Esophagus squamous epithelium (tissue), 5 donors: ENCODE measurements at regions of chr20 and their contacts with region 1.

Region 1: DNA sequence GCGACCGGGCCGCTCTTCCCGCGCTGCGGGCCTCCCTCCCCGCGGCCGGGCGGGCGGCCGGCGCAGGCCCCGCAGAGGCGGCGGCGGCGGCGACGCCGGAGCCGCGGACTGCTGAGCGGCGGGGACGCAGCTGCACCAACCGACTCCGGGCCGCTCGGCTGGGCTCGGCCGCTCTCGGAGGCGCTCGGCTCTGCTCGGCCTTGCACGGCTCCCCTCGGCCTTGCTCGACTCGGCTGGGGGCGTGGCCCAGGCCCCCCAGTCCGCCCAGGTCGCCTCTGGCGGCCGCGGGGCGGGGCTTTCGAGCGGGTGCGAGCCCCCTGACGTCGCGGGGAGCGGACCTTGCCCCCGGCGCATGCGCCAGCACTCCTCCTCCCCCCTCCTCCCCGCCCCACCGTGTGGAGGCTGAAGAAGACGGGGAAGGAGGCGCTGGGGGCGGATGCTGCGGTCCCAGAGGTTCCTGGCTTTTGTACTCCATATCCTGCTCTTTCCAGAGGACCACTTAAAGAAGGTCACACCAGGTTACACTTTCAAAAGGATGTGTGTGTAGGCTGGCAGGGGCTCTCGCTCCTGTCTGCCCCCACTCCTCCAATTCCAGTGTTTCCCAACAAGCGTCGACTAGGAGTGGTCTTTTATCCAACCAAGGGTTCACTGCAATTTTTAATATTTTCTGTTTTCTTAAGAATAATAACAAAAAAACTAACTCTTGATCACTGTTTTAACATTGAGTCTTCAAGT is at the start of gene ZHX3:
- DNase-seq: peak; percentile 54
- H3K4me3 ChIP-seq: peak within 1 kb of the TSS; percentile 75 to 94 (median 86)
- H3K27ac ChIP-seq: peak within 1 kb of the TSS; percentile 92 to 97 (median 94)
- H3K4me1 ChIP-seq: peaks cover 9 to 50% (median 10%) of the 10 kb centered on the region in 3 donors
- H3K27me3 ChIP-seq: no peaks in the 10 kb centered on the region
- CTCF ChIP-seq: no peak
- POLR2A ChIP-seq: peak in 2 of 4 donors; percentile 52 to 61
- total RNA-seq, gene ZHX3: 13.6 to 30.3 (median 15.5) TPM

Region 2: DNA sequence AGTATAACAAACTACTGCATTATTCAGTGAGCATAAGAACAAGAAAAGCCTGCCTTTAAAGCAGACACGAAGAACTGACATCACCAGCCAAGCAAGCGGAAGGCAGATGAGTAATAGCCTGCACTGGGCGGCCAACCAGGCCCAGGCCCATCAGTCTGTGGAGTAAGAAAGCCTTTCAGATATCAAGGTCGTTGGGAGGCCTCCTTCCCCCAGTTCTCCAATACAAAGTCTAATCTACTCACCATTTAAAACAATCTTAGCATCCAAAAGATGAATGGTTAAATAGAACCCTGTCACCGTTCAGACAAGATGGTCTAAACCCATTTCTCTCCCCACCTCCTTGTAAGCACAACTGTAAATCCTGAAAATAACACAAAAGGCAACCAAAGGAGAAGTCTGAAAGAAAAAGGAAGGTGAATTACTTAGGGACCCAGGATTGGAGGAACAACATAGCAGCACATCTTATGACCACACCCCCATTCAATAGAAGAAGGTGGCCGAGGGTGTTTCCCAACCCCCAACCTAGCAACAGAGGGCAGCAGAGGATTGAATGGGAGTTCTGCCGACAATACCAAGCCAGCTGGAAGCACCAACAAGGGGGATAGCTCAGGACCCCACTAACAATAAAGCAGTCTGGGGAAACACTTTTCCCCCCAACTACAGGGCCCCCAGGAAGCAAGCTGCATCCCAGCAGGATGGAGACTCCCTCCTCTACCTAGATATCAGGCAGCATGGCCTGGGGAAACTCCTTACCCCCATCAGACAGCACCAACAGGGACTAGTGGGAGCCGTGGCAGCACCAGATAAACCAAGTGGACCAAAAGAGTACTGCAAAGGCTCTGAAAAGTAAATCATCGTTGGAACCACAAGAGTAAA is 68.1 kb before region 1 on chr20:
- intact Hi-C with region 1: loop called (anchors 10 kb)
- DNase-seq: no peak
- H3K4me3 ChIP-seq: no peak overlapping the region
- H3K27ac ChIP-seq: peak overlapping the region; percentile 66 to 97 (median 92)
- H3K4me1 ChIP-seq: peaks cover 3 to 66% (median 55%) of the 10 kb centered on the region in 3 donors
- H3K27me3 ChIP-seq: no peaks in the 10 kb centered on the region
- CTCF ChIP-seq: peak in 4 of 6 experiments; percentile 9 to 37 (median 20)
- POLR2A ChIP-seq: no peak